HCT116 (cell line): ENCODE measurements at regions of chr7 and their contacts with region 1.

Region 1: DNA sequence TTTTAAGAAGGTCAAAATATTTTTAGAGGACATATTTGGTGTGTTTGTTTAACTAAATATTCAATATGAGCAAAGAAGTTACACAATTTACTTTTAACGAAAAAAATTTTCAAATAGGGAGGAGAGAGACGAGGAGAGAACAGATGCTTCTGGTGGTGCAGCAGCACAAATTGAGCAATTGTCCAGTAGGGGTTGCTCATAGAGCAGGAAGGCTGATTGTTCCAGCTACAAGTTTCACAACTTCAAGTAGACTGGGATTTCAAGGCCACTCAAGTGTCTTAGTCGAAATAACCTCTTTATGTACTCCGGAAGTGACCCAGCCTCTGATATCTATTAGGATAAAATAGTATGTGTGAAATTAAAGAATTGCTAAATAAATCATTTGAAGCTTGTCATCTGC is 197.9 kb downstream of the HDAC9 start:
- DNase-seq: peak; percentile 16
- ATAC-seq: peak; percentile 74
- H3K4me3 ChIP-seq: no peak overlapping the region
- H3K27ac ChIP-seq: no peak overlapping the region
- H3K4me1 ChIP-seq: no peaks in the 10 kb centered on the region
- H3K27me3 ChIP-seq: no peaks in the 10 kb centered on the region
- CTCF ChIP-seq: peak; percentile 38 to 63 (median 53); a peak in 5 of 6 replicates
- POLR2A ChIP-seq: no peak
- RAD21 ChIP-seq: peak; percentile 67

Region 2: DNA sequence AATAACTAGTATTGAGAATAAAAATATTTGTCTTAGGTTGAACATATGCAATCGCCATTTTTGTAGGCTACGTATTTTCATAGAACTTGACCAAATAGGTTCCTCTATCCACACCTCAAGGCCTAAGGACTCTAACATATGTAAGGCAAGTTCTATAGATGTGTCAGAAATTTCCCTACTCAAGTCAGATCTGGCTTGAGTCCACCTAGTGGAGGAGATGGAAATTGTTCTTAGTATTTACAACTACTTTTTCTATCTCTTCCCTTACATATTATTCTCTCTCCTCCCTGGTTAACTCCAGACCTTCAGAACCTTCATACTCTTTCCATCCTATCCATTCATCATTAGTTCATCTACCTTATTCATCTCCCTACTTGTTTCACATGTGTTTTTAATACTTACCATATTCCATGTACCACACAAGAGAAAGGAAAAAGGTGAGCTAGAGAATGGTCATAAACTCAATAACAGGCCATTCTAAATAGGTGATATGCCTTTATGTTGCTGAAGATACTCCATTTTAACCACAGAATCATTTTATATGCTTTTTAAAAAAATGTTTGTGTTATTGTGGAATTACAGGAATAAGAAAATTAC is 372.3 kb before region 1 on chr7:
- CTCF ChIA-PET with region 1: no interaction called
- POLR2A ChIA-PET with region 1: no interaction called
- RAD21 ChIA-PET with region 1: no interaction called
- intact Hi-C with region 1: no loop called
- DNase-seq: peak; percentile 43
- ATAC-seq: peak; percentile 67
- H3K4me3 ChIP-seq: no peak overlapping the region
- H3K27ac ChIP-seq: no peak overlapping the region
- H3K4me1 ChIP-seq: no peaks in the 10 kb centered on the region
- H3K27me3 ChIP-seq: no peaks in the 10 kb centered on the region
- CTCF ChIP-seq: peak; percentile 44 to 62 (median 45); a peak in 5 of 6 replicates
- POLR2A ChIP-seq: no peak
- RAD21 ChIP-seq: peak; percentile 48

Region 3: DNA sequence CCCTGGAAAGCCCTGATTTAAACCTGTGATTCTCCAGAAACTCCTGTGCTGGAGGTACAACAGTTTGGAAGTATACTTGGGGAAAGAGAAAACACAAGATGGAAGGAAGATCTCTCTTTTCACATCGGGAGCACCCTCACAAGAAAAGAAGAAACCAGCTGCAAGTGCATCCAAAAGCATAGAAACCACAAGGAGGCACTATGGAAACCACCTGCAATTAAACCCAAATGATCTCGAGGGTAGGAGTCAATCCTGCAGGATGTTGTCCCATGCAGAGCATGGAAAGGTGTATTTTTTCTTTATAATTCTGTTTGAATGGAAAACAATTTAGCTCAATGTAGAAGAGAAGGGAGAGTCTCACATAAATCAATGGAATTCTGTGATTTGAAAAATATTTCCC is 213.5 kb after region 1 on chr7:
- CTCF ChIA-PET with region 1: no interaction called
- POLR2A ChIA-PET with region 1: no interaction called
- RAD21 ChIA-PET with region 1: no interaction called
- intact Hi-C with region 1: no loop called
- DNase-seq: no peak
- ATAC-seq: no peak
- H3K4me3 ChIP-seq: no peak overlapping the region
- H3K27ac ChIP-seq: no peak overlapping the region
- H3K4me1 ChIP-seq: no peaks in the 10 kb centered on the region
- H3K27me3 ChIP-seq: no peaks in the 10 kb centered on the region
- CTCF ChIP-seq: peak; percentile 10 to 25 (median 25); a peak in 3 of 6 replicates
- POLR2A ChIP-seq: no peak
- RAD21 ChIP-seq: peak; percentile 19; the same call in 1 of the 2 replicates

Region 4: GRCh38 chr7:19442016-19442785 is 748.8 kb after region 1 on chr7:
- CTCF ChIA-PET with region 1: no interaction called
- POLR2A ChIA-PET with region 1: no interaction called
- RAD21 ChIA-PET with region 1: no interaction called
- intact Hi-C with region 1: loop called (anchors 5 kb)
- DNase-seq: peak; percentile 50
- ATAC-seq: peak; percentile 99
- H3K4me3 ChIP-seq: no peak overlapping the region
- H3K27ac ChIP-seq: no peak overlapping the region
- H3K4me1 ChIP-seq: no peaks in the 10 kb centered on the region
- H3K27me3 ChIP-seq: no peaks in the 10 kb centered on the region
- CTCF ChIP-seq: peak; percentile 52 to 63 (median 58); a peak in 5 of 6 replicates
- POLR2A ChIP-seq: no peak
- RAD21 ChIP-seq: peak; percentile 79

Region 5: GRCh38 chr7:19665399-19666008 is 972.1 kb after region 1 on chr7:
- CTCF ChIA-PET with region 1: interaction called, 4 read pairs
- POLR2A ChIA-PET with region 1: no interaction called
- RAD21 ChIA-PET with region 1: no interaction called
- intact Hi-C with region 1: loop called (anchors 10 kb)
- DNase-seq: peak; percentile 12
- ATAC-seq: no peak
- H3K4me3 ChIP-seq: no peak overlapping the region
- H3K27ac ChIP-seq: no peak overlapping the region
- H3K4me1 ChIP-seq: no peaks in the 10 kb centered on the region
- H3K27me3 ChIP-seq: no peaks in the 10 kb centered on the region
- CTCF ChIP-seq: peak; percentile 33 to 69 (median 42); a peak in 4 of 6 replicates
- POLR2A ChIP-seq: no peak
- RAD21 ChIP-seq: peak; percentile 69